ENCODE measurements at regions of chr15 and their contacts with region 1.

Region 1: DNA sequence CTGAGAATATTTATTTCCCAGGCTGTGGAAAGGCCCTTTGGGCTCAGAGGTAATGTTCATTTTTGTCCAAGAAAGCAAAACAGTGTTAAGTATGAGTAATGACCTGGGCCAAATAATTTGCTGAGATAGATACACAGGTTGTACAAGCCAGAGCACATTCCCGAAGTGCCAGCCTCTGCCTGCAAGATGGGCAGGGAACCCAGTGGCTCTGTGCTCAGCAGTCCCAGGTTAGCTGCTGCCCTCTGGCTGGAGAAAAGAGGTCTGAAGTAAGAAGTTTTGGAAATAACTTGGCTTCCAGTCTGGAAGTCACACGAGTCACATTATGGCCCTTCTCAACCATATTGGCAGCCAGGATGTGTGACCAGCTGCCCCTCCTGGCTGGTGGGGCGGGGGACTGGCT is 20.2 kb downstream of the MYZAP start:
- DNase-seq: peak in 5 of 6 donors; percentile 75 to 85 (median 81)
- ATAC-seq: peak; percentile 74 to 86 (median 85)
- H3K4me3 ChIP-seq: no peak overlapping the region
- H3K27ac ChIP-seq: peak overlapping the region; percentile 51 to 69 (median 64)
- H3K4me1 ChIP-seq: peaks cover 34 to 44% (median 36%) of the 10 kb centered on the region in 3 donors
- H3K27me3 ChIP-seq: no peaks in the 10 kb centered on the region
- CTCF ChIP-seq: peak in 2 of 4 donors; percentile 26 to 50

Region 2: DNA sequence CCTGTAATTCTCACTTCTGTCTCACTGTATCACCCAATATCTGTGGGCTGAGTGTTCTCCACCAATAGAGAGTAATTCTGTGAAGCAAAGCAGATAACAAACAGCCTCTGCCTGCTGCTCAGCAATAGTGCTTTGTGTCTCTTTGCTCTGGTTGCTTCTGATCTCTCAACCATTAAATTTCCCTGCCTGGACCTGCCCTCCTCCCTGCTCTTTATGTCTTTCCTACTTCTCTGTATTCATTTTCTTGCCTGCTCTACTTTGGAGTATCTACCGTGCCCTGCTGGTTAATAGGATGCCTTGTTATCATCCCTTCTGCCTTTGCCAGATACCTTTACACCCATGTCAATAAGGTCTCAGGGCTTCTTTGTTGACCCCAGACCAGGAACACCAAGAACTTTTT is 338.5 kb before region 1 on chr15:
- intact Hi-C with region 1: no loop called
- DNase-seq: no peak
- ATAC-seq: no peak
- H3K4me3 ChIP-seq: no peak overlapping the region
- H3K27ac ChIP-seq: no peak overlapping the region
- H3K4me1 ChIP-seq: no peaks in the 10 kb centered on the region
- H3K27me3 ChIP-seq: no peaks in the 10 kb centered on the region
- CTCF ChIP-seq: no peak

Region 3: GRCh38 chr15:57561041-57561711 is 50.8 kb before region 1 on chr15:
- intact Hi-C with region 1: loop called in 2 of 3 experiments (anchors 2 to 5 kb)
- DNase-seq: peak in 5 of 6 donors; percentile 70 to 87 (median 77)
- ATAC-seq: peak; percentile 93 to 97 (median 94)
- H3K4me3 ChIP-seq: no peak overlapping the region
- H3K27ac ChIP-seq: peak overlapping the region in 3 of 4 donors; percentile 22 to 67 (median 63)
- H3K4me1 ChIP-seq: peaks cover 3 to 6% (median 4%) of the 10 kb centered on the region in 3 donors
- H3K27me3 ChIP-seq: no peaks in the 10 kb centered on the region
- CTCF ChIP-seq: peak; percentile 81 to 89 (median 85)